Posterior cingulate gyrus (tissue), 11 donors: ENCODE measurements at regions of chr17 and their contacts with region 1.

Region 1: DNA sequence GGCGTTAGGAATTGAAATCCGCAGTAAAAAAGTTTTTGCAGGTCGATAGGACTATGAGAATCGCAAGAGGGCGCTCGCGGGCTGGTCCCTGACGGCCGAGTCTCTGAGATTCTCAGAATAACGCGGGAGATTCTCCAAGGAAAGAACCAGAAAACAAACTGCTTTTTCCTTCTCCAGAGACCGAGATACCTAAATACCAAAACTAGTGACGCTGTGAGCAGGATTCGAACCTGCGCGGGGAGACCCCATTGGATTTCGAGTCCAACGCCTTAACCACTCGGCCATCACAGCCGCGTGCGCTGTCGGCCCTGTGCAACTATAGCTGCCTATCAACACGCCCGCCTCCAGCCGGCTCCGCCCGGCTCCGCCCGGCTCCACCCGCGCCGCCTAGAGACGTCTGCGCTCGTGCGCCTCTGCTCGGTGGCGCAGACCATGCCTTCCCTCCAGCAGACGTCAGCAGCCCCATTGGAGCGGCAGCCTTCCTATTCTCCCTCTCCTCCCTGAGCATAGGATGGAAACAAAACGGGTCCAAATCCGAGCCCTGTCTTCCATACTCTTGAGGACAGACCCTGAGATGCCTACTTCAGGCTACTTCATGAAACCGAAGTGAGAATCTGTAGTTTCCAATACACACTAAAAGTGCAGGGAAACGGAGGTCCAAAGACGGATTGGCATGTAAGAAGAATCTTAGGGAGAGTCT is 13.4 kb downstream of the PER1 start:
- DNase-seq: peak; percentile 85 to 99 (median 92)

Region 2: GRCh38 chr17:8091033-8091687 is 47.7 kb before region 1 on chr17:
- intact Hi-C with region 1: no loop called
- DNase-seq: peak in 1 of 10 donors; percentile 43

Region 3: DNA sequence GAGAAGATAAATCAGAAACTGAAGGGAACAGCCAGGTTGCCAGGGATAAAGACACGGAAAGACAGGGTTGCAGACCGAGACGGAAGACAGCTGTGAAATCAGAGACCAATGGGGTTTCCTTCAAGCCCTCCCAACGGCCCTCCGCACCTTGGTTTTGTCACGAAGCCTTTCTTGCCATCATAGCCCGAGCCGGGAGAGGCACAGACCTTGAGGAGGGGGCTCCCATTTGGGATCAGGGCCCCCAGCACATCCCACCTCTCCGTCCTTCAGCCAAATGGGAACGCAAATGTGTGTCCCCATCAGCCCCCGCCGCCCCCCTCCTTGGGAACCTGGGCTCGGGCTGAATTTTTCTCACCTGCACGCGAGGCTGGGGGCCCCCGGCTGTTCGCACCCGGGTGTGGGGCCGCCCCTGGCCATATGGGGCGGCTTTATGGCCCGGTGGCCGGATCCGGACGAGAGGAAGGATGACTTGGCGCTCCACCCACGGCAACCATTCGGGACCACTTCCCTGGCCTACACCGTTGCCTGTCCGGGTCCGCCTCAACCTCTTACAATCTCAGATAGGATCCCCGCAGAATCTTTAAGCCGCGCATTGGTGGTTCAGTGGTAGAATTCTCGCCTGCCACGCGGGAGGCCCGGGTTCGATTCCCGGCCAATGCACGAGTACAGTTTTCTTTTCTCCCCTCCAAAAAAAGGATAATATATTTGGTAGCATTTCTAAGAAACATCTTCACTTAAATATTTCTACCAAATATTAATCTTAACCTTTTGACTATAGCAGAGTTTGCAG is 13.5 kb before region 1 on chr17:
- intact Hi-C with region 1: loop called (anchors 2 kb)
- DNase-seq: peak; percentile 73 to 97 (median 86)

Region 4: GRCh38 chr17:8156246-8156992 is 17.6 kb after region 1 on chr17:
- intact Hi-C with region 1: loop called (anchors 1 kb)
- DNase-seq: peak; percentile 98 to 100 (median 99)